ENCODE measurements at regions of chr4 and their contacts with region 1.

Region 1: DNA sequence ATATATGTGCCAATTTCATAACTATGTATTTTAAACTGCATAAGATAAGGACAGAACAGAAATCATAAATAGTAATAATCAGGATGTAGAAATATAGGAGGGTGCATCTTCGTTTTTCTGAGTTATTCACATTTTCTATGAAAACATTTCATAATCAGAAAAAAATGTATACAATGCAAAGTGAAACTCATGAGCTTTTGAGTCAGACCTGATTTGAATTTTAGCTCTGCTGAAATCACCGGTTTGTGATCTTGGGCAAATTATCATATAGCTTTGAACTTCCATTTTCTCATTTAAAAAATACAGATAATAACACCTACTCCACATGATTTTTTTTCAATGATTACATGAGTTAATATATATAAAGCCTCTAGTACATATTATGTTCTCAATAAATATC is 106.9 kb downstream of the KDR start:
- DNase-seq: no peak
- CTCF ChIP-seq: no peak

Region 2: DNA sequence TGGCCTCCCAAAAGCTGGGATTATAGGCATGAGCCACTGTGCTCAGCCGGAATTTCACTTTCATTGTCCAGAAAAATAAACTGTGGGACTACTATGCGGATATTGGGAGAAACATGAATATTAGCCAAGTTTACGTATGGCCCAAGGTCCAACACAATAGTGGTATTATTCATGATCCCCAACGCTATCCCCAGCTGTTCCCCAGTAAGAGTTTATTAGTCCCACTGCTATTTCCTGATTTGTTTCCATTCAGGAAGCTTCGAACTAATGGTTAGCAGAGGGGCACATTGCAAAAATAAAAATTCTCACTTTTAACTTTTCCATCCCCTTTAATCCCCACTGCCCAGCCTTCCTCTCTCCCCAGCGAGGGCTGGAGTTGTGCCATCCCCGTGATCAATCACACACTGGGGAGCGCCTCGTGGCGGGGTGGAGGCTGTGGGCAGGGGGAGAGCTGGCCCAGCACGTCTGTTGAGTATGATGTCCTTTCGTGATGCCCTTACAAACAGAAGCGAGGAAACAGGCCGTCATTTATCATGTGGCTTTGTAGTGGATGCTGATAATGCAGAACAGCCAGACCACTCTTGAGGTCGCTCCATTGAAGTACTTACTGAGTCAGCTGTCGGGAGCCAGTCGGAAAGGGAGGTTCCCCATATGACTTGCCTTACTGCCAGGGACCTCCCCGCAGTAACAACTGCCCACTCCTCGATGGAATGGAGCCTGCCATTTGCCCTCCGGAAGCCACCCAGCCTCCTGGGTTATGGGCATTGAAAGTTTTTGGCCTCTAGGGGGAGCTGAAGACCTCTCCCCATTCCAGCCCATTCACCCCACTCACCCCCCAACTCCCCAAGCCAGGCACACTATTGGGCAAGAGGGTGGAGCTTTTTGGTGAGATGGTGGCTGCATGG is 10.1 kb before region 1 on chr4:
- CTCF ChIA-PET with region 1: interaction called, 15 read pairs
- POLR2A ChIA-PET with region 1: no interaction called
- DNase-seq: peak; percentile 22
- CTCF ChIP-seq: no peak

Region 3: GRCh38 chr4:55051532-55051931 is 33.0 kb after region 1 on chr4:
- CTCF ChIA-PET with region 1: no interaction called
- POLR2A ChIA-PET with region 1: no interaction called
- DNase-seq: no peak
- CTCF ChIP-seq: no peak

Measured in GM10248 (cell line).